ENCODE measurements at regions of chr1 and their contacts with region 1.

Region 1: DNA sequence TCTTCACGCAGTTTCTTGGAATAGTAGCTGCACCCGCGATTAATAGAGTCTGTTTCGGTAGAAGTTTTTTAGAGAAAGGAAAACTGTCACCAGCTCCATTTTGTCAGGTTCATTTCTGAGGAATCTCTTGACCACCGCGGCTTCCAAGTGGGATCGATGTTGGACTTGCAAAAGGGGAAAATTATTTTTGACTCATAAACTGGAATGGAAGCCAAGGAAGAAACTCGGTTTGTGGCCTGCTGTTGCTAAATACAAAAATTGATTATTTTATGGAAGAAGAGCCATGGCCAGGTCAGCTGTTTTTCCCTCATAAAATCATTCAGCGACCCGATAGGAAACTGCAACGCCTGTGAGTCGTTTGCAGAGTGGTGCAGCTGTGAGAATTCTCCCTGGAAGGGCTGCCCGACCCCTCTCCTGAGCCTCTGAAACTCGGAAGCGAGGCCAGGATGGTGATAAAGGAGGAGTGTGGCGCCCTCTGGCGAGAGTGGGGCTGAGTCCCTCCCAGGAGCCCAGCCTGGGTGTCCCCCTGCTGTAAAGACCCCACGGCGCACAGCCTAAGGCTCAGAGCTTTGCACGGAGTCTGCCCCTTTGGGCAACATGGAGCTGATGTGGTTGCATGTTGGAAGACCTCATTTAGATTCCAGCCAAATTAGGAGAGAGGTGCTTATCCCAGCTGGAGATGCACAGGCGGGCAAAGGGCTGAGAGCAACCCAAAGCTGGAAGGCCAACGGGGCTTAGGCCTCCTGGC is 83.6 kb upstream of the SLC25A33 start:
- DNase-seq: peak; percentile 85
- H3K4me3 ChIP-seq: no peak overlapping the region
- H3K27ac ChIP-seq: peak overlapping the region in 2 of 4 donors; percentile 9 to 44
- H3K4me1 ChIP-seq: peaks cover 0 to 10% (median 5%) of the 10 kb centered on the region in 4 donors
- H3K27me3 ChIP-seq: no peaks in the 10 kb centered on the region
- CTCF ChIP-seq: peak; percentile 78 to 86 (median 79)
- EP300 ChIP-seq: no peak
- POLR2A ChIP-seq: no peak

Region 2: DNA sequence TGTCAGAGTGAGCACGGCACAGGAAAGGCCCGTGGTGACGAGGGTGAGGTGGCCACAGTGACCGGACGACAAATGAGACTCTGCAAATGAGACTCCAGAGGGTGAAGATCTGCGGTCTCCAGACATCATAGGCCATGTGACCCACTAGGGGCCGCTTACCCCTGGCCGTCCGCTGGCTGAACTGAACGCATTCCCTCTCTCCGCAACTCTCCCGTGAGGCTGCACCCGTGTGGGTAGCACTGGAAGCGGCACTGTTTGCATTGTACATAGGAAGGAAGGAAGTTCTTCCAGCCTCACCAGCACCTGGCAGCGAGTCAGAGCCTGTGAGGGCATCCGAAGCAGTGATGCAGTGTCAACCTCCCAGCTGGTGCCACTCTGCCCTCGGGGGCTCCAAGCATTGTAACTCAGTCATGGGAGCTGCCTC is 186.6 kb before region 1 on chr1:
- intact Hi-C with region 1: loop called (anchors 5 kb)
- DNase-seq: no peak
- H3K4me3 ChIP-seq: no peak overlapping the region
- H3K27ac ChIP-seq: no peak overlapping the region
- H3K4me1 ChIP-seq: peaks cover 0 to 27% (median 18%) of the 10 kb centered on the region in 4 donors
- H3K27me3 ChIP-seq: no peaks in the 10 kb centered on the region
- CTCF ChIP-seq: no peak
- EP300 ChIP-seq: no peak
- POLR2A ChIP-seq: no peak

Region 3: GRCh38 chr1:9338397-9339246 is 117.0 kb before region 1 on chr1:
- intact Hi-C with region 1: no loop called
- DNase-seq: peak; percentile 84
- H3K4me3 ChIP-seq: peak overlapping the region in 1 of 4 donors; percentile 9
- H3K27ac ChIP-seq: peak overlapping the region; percentile 59 to 85 (median 82)
- H3K4me1 ChIP-seq: peaks cover 0 to 93% (median 57%) of the 10 kb centered on the region in 4 donors
- H3K27me3 ChIP-seq: no peaks in the 10 kb centered on the region
- CTCF ChIP-seq: no peak
- EP300 ChIP-seq: no peak
- POLR2A ChIP-seq: no peak